Activated B cell treated with CpG ODN at 0.5 μM for 24 hours (primary cell): ENCODE measurements at regions of chr2 and their contacts with region 1.

Region 1: GRCh38 chr2:160994141-160995002 is 165.9 kb upstream of the TANK start:
- DNase-seq: no peak
- ATAC-seq: peak; percentile 37
- H3K4me3 Mint-ChIP-seq: no peak overlapping the region
- H3K27ac Mint-ChIP-seq: no peak overlapping the region
- H3K4me1 Mint-ChIP-seq: peaks cover 3% of the 10 kb centered on the region
- H3K27me3 Mint-ChIP-seq: no peaks in the 10 kb centered on the region
- CTCF ChIP-seq: peak; percentile 38

Region 2: DNA sequence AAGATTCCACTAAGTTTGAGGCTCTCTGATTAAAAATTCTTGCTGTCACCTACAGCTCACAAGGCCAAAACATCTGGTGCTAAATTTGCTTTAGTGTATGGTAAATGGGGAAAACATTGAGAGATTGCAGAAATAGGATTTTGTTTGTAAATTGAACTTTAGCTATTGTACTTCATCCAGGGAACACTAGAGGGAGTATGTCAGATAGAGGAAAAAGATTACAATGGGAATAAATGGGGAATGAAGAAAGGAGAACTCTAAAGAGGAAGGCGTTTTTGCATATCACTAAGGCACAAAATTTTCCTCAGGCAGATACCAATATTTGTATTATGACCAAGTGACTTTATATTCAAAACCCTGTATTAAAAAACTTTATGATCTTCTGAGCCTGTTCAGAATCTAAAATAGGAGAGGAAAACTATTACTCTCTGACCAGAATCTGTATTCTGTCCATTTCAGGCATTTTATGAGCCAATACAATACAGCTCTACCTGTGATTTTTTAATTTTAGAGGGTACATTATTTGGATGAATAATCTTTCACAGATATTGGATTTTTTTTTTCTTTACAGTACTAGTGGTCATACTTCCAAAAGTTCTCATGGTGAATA is 742.0 kb before region 1 on chr2:
- CTCF ChIA-PET with region 1: interaction called, 54 read pairs
- POLR2A ChIA-PET with region 1: no interaction called
- intact Hi-C with region 1: loop called (anchors 1 kb)
- DNase-seq: no peak
- ATAC-seq: no peak
- H3K4me3 Mint-ChIP-seq: no peak overlapping the region
- H3K27ac Mint-ChIP-seq: no peak overlapping the region
- H3K4me1 Mint-ChIP-seq: peaks cover 6% of the 10 kb centered on the region
- H3K27me3 Mint-ChIP-seq: peaks cover 8% of the 10 kb centered on the region
- CTCF ChIP-seq: peak; percentile 71

Region 3: GRCh38 chr2:160429248-160430000 is 564.9 kb before region 1 on chr2:
- CTCF ChIA-PET with region 1: no interaction called
- POLR2A ChIA-PET with region 1: no interaction called
- intact Hi-C with region 1: loop called (anchors 1 kb)
- DNase-seq: no peak
- ATAC-seq: peak; percentile 46
- H3K4me3 Mint-ChIP-seq: no peak overlapping the region
- H3K27ac Mint-ChIP-seq: peak overlapping the region; percentile 54
- H3K4me1 Mint-ChIP-seq: peaks cover 34% of the 10 kb centered on the region
- H3K27me3 Mint-ChIP-seq: no peaks in the 10 kb centered on the region
- CTCF ChIP-seq: peak; percentile 65

Region 4: DNA sequence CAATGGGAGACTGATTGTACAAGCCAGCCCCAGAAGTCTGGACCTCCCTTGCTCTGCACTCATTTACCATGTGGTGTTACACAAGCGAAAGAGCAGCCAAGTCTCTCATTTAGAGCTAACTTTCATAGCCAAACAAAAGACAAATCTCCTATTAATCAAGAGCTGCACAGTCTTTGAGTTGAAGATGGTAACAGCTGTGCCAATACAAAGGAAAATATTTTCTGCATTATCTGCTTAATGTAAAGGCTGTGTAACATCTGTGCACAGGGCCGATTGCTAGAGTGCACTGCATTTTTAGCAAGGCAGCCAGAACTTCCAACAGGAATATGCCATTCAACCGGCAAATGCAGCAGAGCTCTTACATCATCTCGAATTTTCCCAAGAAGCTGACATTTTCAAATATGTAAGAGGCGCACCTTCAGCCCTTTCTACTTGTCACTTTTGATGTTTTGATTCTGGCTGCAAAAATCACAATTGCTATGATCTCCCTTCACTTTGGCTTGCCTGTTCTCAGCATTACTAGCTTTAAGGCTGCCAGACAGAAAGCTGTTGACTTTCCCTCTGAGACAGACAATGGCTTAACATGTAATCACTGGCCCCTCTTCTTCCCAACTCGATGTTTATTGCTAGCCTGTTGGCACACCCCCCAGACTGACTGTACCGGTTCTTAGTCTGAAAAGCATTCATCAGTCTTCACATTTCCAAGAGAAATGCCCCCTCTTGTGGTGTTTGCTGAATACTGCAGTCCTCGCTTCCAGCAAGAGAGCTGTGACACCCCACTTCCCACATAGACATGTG is 69.0 kb after region 1 on chr2:
- CTCF ChIA-PET with region 1: interaction called, 9 read pairs
- POLR2A ChIA-PET with region 1: no interaction called
- intact Hi-C with region 1: loop called (anchors 2 kb)
- DNase-seq: peak; percentile 18
- ATAC-seq: peak; percentile 93
- H3K4me3 Mint-ChIP-seq: no peak overlapping the region
- H3K27ac Mint-ChIP-seq: no peak overlapping the region
- H3K4me1 Mint-ChIP-seq: peaks cover 4% of the 10 kb centered on the region
- H3K27me3 Mint-ChIP-seq: no peaks in the 10 kb centered on the region
- CTCF ChIP-seq: peak; percentile 94

Region 5: DNA sequence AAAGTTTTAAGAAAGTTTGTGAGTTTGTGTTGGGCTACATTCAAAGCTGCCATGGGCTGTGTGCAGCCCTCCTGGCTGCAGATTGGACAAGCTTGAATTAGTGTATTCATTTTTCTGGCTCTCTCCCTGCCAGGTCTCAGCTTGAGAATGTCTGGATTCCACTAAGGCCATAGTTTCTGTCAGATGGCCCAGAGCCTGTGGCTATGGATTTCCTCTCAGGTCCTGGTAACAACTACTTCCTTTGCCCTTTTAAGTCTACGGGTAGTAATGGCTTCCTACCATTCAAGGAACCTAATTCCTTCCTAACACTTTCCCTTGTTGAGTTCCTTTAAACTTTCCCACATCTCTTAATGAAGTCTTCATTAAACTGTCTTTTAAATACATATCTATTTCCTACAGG is 289.6 kb after region 1 on chr2:
- CTCF ChIA-PET with region 1: no interaction called
- POLR2A ChIA-PET with region 1: no interaction called
- intact Hi-C with region 1: no loop called
- DNase-seq: no peak
- ATAC-seq: no peak
- H3K4me3 Mint-ChIP-seq: no peak overlapping the region
- H3K27ac Mint-ChIP-seq: no peak overlapping the region
- H3K4me1 Mint-ChIP-seq: no peaks in the 10 kb centered on the region
- H3K27me3 Mint-ChIP-seq: peaks cover 16% of the 10 kb centered on the region
- CTCF ChIP-seq: no peak